HAP-1 (cell line): ENCODE measurements at regions of chr19 and their contacts with region 1.

Region 1: DNA sequence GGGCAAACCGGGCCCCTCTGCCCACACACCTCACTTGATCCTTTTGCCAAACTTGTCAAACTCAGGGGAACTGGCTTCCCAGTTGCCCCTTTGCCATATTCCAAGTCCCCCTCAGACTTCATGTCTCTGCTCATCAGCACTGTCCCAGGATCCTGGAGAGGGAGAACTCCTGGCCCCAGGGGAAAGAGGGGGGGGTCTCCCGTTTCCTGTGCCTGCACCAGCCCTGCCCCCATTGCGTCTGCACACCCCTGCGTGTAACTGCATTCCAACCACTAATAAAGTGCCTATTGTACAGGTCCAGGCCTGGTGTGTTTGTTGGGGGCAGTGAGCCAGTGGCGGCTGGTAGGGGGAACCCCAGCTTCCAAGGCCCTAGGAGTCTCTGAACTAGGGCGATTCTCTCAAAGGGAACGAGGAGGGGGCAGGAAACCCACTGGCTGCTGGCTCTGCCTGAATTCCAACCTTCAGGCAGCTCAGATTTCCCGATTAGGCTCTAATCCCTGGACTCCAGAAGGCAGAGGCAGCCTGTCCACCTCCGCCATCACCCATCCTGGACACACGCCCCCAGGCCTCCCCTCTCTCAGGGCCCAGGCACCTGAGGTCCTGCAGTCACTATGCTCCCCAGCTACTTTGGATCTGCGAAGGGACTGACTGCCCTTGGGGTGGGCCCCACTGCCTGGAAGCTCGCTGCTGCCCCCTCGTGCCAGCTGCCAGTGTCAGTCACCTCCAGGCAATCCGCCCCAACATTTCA is 9.7 kb upstream of the ILF3 start:
- DNase-seq: peak; percentile 77 to 90
- H3K4me3 ChIP-seq: no peak overlapping the region
- H3K4me1 ChIP-seq: 0 out of 2 replicates have a peak, but pooled peaks cover 2% of the 10 kb centered on the region
- H3K27me3 ChIP-seq: no peaks in the 10 kb centered on the region

Region 2: GRCh38 chr19:10580979-10581631 is 63.3 kb before region 1 on chr19:
- in situ Hi-C with region 1: loop called (anchors 5 kb)
- DNase-seq: peak; percentile 92 to 95
- H3K4me3 ChIP-seq: no peak overlapping the region
- H3K4me1 ChIP-seq: no peaks in the 10 kb centered on the region
- H3K27me3 ChIP-seq: no peaks in the 10 kb centered on the region

Region 3: GRCh38 chr19:10686661-10687517 is 42.5 kb after region 1 on chr19:
- in situ Hi-C with region 1: no loop called
- DNase-seq: no peak
- H3K4me3 ChIP-seq: no peak overlapping the region
- H3K4me1 ChIP-seq: no peaks in the 10 kb centered on the region
- H3K27me3 ChIP-seq: no peaks in the 10 kb centered on the region